ENCODE measurements at regions of chrX and their contacts with region 1.

Region 1: GRCh38 chrX:129065895-129066294 is 457.4 kb downstream of the SMARCA1 start:
- DNase-seq: no peak

Region 2: DNA sequence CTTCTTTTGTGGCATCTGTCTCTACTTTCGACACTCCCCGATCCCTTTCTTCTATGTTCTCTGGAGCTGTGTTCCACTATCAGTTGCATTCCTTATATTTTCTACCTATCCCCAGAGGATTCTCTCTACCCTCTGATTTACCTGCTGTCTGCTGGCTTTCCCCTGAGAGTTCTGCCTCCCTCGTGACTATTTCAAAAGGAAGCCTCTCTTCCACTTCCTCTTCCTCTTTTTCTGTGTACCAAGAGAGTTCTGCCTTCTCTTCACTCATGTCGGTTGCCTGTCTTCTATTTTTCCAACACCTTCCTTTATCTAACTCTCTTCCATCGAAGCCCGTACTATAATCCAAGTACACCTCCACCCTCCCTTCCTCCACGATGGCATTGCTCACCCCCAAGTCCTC is 174.3 kb before region 1 on chrX:
- intact Hi-C with region 1: loop called in 1 of 2 experiments (anchors 5 kb)
- DNase-seq: no peak

Region 3: GRCh38 chrX:129462707-129463106 is 396.8 kb after region 1 on chrX:
- intact Hi-C with region 1: loop called in 1 of 2 experiments (anchors 5 kb)
- DNase-seq: no peak

Measured in posterior vena cava (tissue), 2 donors.